GM12878 (cell line): ENCODE measurements at regions of chr16 and their contacts with region 1.

Region 1: GRCh38 chr16:9870962-9871361 is 311.3 kb downstream of the GRIN2A start:
- DNase-seq: no peak
- ATAC-seq: no peak
- H3K4me3 ChIP-seq: no peak overlapping the region
- H3K27ac ChIP-seq: no peak overlapping the region
- H3K4me1 ChIP-seq: no peaks in the 10 kb centered on the region
- H3K27me3 ChIP-seq: no peaks in the 10 kb centered on the region
- CTCF ChIP-seq: no peak
- EP300 ChIP-seq: no peak
- POLR2A ChIP-seq: no peak
- RAD21 ChIP-seq: no peak

Region 2: GRCh38 chr16:9885467-9885866 is 14.5 kb after region 1 on chr16:
- CTCF ChIA-PET with region 1: interaction called, 3 read pairs
- POLR2A ChIA-PET with region 1: interaction called, 3 read pairs
- RAD21 ChIA-PET with region 1: interaction called, 5 read pairs
- SMC1A ChIA-PET with region 1: interaction called, 10 read pairs
- in situ Hi-C with region 1: no loop called
- intact Hi-C with region 1: no loop called
- DNase-seq: no peak
- ATAC-seq: no peak
- H3K4me3 ChIP-seq: no peak overlapping the region
- H3K27ac ChIP-seq: no peak overlapping the region
- H3K4me1 ChIP-seq: no peaks in the 10 kb centered on the region
- H3K27me3 ChIP-seq: no peaks in the 10 kb centered on the region
- CTCF ChIP-seq: no peak
- EP300 ChIP-seq: no peak
- POLR2A ChIP-seq: no peak
- RAD21 ChIP-seq: no peak